WTC11 (cell line): ENCODE measurements at regions of chr15 and their contacts with region 1.

Region 1: DNA sequence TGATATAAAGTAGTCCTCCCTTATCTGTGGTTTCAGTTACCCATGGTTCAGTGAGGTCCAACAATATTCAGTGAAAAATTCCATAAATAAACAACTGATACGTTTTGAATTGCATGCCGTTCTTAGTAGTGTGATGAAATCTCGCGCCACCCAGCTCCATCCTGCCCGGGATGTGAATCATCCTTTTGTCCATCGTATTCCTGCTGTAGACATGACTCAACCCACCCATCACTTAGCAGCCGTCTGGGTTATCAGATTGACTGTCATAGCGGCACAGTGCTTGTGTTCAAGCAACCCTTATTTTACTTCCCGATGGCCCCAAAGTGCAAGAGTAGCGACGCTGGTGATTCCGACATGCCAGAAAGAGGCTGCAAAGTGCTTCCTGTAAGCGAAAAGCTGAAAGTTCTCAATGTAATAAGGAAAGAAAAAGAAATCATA is 48.0 kb upstream of the MEX3B start:
- DNase-seq: no peak
- ATAC-seq: no peak
- H3K4me3 Mint-ChIP-seq: no peak overlapping the region
- H3K27ac Mint-ChIP-seq: no peak overlapping the region
- H3K4me1 Mint-ChIP-seq: peaks cover 26% of the 10 kb centered on the region
- H3K27me3 Mint-ChIP-seq: peaks cover 2% of the 10 kb centered on the region; the same call in 1 of the 2 replicates
- CTCF ChIP-seq: no peak

Region 2: DNA sequence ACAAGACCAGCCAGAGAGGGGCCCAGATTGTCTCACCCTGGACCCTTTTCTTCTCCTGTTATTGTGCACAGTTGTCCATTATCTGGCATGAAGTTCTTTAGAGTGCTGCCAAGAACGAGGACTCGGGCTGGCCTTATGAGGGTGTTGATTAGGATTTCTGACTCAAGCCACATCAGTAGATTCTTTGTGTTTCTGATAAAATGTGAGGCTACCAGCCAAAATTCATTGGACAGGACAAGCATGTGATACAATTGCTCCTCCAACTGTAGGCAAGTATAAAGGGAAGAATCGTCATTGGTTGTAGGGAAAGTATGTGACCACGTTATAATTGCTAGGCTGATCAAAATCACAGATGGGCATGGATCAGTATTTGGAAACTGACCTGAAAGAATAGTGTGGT is 620.6 kb before region 1 on chr15:
- CTCF ChIA-PET with region 1: no interaction called
- POLR2A ChIA-PET with region 1: interaction called, 15 read pairs
- DNase-seq: no peak
- ATAC-seq: no peak
- H3K4me3 Mint-ChIP-seq: no peak overlapping the region
- H3K27ac Mint-ChIP-seq: no peak overlapping the region
- H3K4me1 Mint-ChIP-seq: peaks cover 4% of the 10 kb centered on the region
- H3K27me3 Mint-ChIP-seq: no peaks in the 10 kb centered on the region
- CTCF ChIP-seq: no peak

Region 3: GRCh38 chr15:81819924-81820635 is 273.7 kb before region 1 on chr15:
- CTCF ChIA-PET with region 1: no interaction called
- POLR2A ChIA-PET with region 1: no interaction called
- DNase-seq: no peak
- ATAC-seq: no peak
- H3K4me3 Mint-ChIP-seq: no peak overlapping the region
- H3K27ac Mint-ChIP-seq: 0 out of 2 replicates have a peak overlapping the region, but pooled peaks have one; percentile 24
- H3K4me1 Mint-ChIP-seq: 0 out of 2 replicates have a peak, but pooled peaks cover 2% of the 10 kb centered on the region
- H3K27me3 Mint-ChIP-seq: no peaks in the 10 kb centered on the region
- CTCF ChIP-seq: no peak

Region 4: GRCh38 chr15:82132742-82133141 is 38.9 kb after region 1 on chr15:
- CTCF ChIA-PET with region 1: no interaction called
- POLR2A ChIA-PET with region 1: no interaction called
- DNase-seq: no peak
- ATAC-seq: no peak
- H3K4me3 Mint-ChIP-seq: no peak overlapping the region
- H3K27ac Mint-ChIP-seq: no peak overlapping the region
- H3K4me1 Mint-ChIP-seq: no peaks in the 10 kb centered on the region
- H3K27me3 Mint-ChIP-seq: no peaks in the 10 kb centered on the region
- CTCF ChIP-seq: no peak